Spleen (tissue), 13 donors: ENCODE measurements at regions of chr3 and their contacts with region 1.

Region 1: GRCh38 chr3:183472155-183472554 is 43.7 kb upstream of the MCF2L2 start:
- DNase-seq: no peak
- H3K4me3 ChIP-seq: no peak overlapping the region
- H3K27ac ChIP-seq: no peak overlapping the region
- H3K4me1 ChIP-seq: peaks cover 0 to 14% (median 7%) of the 10 kb centered on the region in 6 donors
- H3K27me3 ChIP-seq: no peaks in the 10 kb centered on the region
- CTCF ChIP-seq: no peak
- POLR2A ChIP-seq: no peak

Region 2: DNA sequence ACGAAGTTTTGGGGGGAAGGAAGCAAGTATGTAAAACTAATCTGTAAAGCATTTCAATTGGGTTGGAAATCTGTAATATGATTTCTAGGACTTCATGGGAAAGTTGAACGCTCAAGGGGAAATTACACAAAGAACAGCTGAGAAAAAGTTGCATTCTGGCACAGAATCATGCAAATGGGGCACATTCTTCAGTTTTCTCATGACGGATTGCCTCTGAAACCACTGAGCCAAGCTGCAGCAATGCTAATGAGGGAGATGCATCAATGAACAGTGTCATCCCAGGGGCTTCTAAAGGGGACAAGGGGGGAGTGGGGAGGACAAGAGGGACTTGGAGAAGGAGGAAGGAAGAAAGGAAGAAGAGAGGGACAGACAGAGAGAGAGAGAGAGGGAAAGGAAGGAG is 970.3 kb before region 1 on chr3:
- intact Hi-C with region 1: no loop called
- DNase-seq: no peak
- H3K4me3 ChIP-seq: no peak overlapping the region
- H3K27ac ChIP-seq: no peak overlapping the region
- H3K4me1 ChIP-seq: no peaks in the 10 kb centered on the region
- H3K27me3 ChIP-seq: peaks cover 0 to 9% (median 0%) of the 10 kb centered on the region in 7 donors
- CTCF ChIP-seq: no peak
- POLR2A ChIP-seq: no peak

Region 3: DNA sequence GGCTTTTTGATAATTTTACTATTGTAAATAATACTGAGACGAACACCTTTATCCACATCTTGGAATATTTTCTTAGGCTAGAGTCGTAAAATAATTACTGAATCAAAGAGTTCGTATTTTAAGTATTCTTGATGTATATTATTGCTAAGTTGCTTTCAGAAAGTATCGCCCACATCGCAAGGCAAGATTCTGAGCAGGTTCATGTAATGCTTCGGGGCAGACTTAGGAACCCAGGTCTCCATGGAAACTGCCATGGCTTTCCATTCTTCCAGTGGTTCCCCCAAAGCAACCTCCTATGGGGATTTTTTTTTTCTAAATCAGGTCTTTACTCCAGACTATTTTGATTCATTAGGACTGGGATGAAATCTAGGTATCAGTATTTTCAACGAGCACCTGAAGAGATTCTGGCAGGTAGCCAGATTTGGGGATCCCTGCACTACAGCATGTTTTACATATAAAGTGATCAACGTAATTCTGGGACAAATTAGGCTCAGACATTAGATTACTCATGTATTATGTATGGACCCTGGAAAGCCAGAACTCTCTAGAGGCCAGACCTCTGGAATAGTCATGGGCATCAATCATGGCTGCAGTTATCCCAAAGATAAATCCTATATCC is 132.6 kb before region 1 on chr3:
- intact Hi-C with region 1: no loop called
- DNase-seq: no peak
- H3K4me3 ChIP-seq: no peak overlapping the region
- H3K27ac ChIP-seq: no peak overlapping the region
- H3K4me1 ChIP-seq: peaks cover 0 to 6% (median 0%) of the 10 kb centered on the region in 6 donors
- H3K27me3 ChIP-seq: no peaks in the 10 kb centered on the region
- CTCF ChIP-seq: no peak
- POLR2A ChIP-seq: no peak

Region 4: DNA sequence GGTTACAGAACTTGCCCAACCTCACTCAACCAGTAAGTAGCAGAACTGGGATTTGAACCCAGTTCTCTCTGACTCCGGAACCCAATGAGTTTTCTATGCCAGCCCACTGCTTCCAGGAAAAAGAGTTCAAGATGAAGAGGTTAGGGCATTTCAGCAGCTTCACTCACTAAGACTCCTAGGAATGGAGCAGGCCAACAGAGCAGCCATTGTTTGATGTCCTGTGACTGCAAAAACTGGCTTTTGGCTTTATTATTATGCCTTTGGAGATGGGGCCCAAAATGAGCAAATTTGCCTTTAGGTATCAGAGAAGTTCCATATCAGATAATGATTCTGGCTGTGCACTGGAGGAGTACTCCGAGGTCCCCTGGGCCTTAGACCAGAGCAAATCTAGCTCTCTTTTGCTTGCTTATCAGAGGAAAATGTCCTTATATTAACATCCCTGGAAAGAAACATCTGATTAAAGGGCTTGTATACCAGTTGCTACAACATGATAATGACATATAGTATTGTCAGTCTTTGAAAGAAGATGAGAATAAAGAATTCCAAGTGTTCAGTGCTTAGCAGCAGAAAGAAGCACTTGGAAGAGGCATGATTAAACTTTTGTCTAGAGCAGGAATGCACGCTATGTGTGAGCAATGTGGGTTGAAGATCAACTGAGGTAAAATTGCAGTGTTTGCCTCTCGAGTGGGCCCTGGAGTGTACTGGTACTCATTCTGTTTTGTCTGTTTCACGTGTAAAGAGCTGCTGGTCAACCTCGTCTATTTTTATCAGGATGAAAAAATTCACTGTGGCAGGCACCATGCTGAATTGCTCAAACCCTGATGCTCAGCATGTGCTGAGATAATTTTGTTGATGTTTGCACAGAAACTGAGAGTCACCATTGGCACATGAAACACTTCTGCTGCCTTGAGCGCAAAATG is 141.5 kb after region 1 on chr3:
- intact Hi-C with region 1: no loop called
- DNase-seq: no peak
- H3K4me3 ChIP-seq: no peak overlapping the region
- H3K27ac ChIP-seq: no peak overlapping the region
- H3K4me1 ChIP-seq: no peaks in the 10 kb centered on the region
- H3K27me3 ChIP-seq: no peaks in the 10 kb centered on the region
- CTCF ChIP-seq: no peak
- POLR2A ChIP-seq: no peak

Region 5: GRCh38 chr3:183766745-183767606 is 294.8 kb after region 1 on chr3:
- intact Hi-C with region 1: loop called (anchors 5 kb)
- DNase-seq: peak; percentile 78
- H3K4me3 ChIP-seq: no peak overlapping the region
- H3K27ac ChIP-seq: no peak overlapping the region
- H3K4me1 ChIP-seq: peaks cover 0 to 29% (median 8%) of the 10 kb centered on the region in 6 donors
- H3K27me3 ChIP-seq: no peaks in the 10 kb centered on the region
- CTCF ChIP-seq: peak; percentile 49 to 84 (median 77)
- POLR2A ChIP-seq: no peak